Aorta (tissue), 5 donors: ENCODE measurements at regions of chr10 and their contacts with region 1.

Region 1: DNA sequence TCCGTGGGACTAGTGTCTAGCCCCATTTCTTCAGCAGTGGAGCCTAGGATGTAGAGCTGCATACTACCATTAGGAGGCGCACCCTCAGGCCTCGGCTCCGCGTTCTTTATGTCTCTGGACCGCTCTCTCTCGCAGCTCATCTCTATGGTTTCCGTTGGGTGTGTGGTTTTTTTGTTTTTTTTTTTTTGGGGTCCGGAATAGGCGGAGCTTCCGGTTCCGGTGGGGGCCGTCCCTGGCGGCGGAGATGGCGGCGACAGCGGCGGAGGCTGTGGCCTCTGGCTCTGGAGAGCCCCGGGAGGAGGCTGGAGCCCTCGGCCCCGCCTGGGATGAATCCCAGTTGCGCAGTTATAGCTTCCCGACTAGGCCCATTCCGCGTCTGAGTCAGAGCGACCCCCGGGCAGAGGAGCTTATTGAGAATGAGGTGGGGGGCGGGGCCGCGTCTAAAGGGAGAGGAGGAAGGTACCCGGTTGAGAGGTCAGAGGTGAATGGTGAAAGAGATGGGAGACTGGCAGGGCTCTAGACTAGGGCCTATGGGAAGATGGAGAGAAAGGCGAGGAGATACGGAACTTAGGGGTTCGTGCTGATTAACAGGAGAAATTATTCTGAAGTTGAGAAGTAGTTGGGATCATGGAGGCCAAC is at the start of gene HIF1AN:
- DNase-seq: peak; percentile 92 to 95
- ATAC-seq: peak; percentile 99
- H3K4me3 ChIP-seq: peak within 1 kb of the TSS; percentile 57 to 76
- H3K27ac ChIP-seq: peak within 1 kb of the TSS; percentile 56 to 89
- H3K4me1 ChIP-seq: peaks cover 0 to 8% of the 10 kb centered on the region in 2 donors
- H3K27me3 ChIP-seq: no peaks in the 10 kb centered on the region
- total RNA-seq, gene HIF1AN: 35.8 to 42.7 TPM

Region 2: GRCh38 chr10:100346765-100347567 is 188.9 kb before region 1 on chr10 and contains the start of gene SCD:
- intact Hi-C with region 1: loop called in 1 of 2 experiments (anchors 10 kb)
- DNase-seq: peak; percentile 91
- ATAC-seq: peak; percentile 86
- H3K4me3 ChIP-seq: peak within 1 kb of the TSS; percentile 50 to 61
- H3K27ac ChIP-seq: no peak within 1 kb of the TSS
- H3K4me1 ChIP-seq: no peaks in the 10 kb centered on the region
- H3K27me3 ChIP-seq: no peaks in the 10 kb centered on the region
- total RNA-seq, gene SCD: 22.7 to 47.3 TPM

Region 3: DNA sequence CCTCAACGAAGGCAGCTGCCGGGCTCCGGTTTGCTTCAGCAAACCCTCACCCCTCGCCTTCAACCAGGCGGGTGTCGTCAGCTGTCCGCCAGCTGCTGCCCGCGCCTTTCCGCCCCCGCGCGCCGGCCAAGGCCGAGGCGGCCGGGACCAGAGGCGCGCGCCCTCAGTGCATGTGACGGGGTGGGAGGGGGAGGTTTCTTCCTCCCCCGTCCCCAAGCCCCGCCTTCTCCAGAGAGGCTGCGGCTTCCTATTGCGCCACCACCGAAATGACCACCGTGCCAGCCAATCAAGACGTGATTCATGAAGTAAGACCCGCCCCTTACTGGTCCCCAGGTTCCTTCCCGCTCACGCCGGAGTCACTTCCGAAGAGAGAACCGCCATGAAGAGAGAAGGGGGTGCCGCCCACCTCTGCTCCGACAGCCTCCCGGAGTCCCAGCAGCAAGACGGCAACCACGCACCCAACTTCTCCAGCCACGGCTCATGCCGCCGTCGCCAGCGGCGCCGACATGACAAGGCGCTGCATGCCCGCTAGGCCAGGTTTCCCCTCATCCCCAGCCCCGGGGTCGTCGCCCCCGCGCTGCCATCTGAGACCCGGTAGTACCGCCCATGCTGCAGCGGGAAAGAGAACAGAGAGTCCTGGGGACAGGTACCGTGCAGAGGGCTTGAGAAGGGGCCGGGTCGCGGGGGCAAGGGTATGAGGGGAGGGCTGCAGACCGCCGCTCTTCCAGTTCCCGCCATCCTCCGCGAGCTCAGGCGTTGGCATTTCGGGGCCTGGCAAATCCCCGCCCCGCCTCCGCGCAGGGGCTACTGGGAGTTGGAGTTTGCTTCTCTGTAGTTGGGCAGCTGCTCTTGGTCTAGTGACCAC is 377.0 kb after region 1 on chr10 and contains the start of gene SLF2:
- intact Hi-C with region 1: loop called (anchors 10 kb)
- DNase-seq: peak; percentile 98
- ATAC-seq: peak; percentile 99
- H3K4me3 ChIP-seq: peak within 1 kb of the TSS; percentile 72 to 76
- H3K27ac ChIP-seq: peak within 1 kb of the TSS; percentile 52 to 96
- H3K4me1 ChIP-seq: peaks cover 0 to 4% of the 10 kb centered on the region in 2 donors
- H3K27me3 ChIP-seq: no peaks in the 10 kb centered on the region
- total RNA-seq, gene SLF2: 20.3 to 38.3 TPM